GM10248 (cell line): ENCODE measurements at regions of chr16 and their contacts with region 1.

Region 1: DNA sequence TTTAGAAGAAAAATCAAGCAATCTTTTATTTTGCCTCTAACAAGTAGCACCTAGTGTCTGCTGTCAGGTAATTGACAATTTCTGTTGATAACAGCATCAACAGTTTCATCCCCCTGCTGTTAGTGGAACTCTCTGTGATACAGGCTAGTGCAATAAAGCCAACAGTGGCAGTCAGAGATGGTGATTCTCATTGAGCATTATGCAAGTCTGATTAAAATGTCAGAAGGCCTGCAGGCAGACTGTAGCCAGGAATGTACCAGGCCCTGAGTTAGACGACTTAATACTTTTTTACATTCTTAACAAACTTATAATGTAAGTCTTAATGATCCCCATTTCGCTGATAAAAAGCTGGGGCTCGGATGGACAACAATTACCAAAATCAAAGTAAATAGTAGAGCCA is 14.6 kb downstream of the CYLD start:
- DNase-seq: no peak
- CTCF ChIP-seq: no peak

Region 2: DNA sequence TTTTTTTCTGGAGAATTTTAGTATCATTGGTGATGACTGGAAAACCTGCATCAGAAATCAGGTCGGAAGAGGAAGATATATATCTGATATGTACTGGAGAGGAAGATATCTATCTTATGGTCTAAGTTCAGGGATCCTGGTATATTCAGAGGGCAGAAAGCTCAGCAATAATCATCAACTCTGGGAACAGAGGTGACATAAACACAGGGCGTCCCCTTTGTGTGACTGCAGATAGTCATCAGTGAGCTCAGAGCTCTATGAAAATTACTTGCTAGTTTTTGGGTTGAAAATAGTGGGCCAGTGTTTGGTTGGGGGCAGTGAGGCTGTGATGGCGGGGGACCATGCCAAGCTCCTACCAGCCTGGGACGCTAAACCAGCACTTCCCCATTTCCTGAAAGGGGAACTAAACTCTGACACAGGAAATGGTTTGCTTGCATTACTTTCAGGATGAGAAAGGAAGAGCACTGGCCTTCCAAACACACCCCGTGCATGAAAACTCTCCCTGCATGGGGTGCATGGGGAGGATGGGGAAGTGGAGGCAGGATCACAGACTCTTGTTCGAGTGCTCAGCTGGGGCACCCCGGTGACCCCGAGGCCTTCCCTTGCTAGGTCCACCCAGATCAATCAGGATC is 47.3 kb before region 1 on chr16:
- CTCF ChIA-PET with region 1: no interaction called
- POLR2A ChIA-PET with region 1: no interaction called
- DNase-seq: peak; percentile 45
- CTCF ChIP-seq: no peak

Region 3: GRCh38 chr16:50741808-50742575 is 14.5 kb before region 1 on chr16 and contains the start of gene CYLD:
- CTCF ChIA-PET with region 1: interaction called, 38 read pairs
- POLR2A ChIA-PET with region 1: interaction called, 3 read pairs
- DNase-seq: peak; percentile 98
- CTCF ChIP-seq: no peak

Region 4: GRCh38 chr16:50960517-50961202 is 204.2 kb after region 1 on chr16:
- CTCF ChIA-PET with region 1: no interaction called
- POLR2A ChIA-PET with region 1: no interaction called
- DNase-seq: no peak
- CTCF ChIP-seq: no peak